A549 (cell line): ENCODE measurements at regions of chr5 and their contacts with region 1.

Region 1: GRCh38 chr5:178965465-178966055 is 24.6 kb downstream of the ZNF454 start:
- DNase-seq: no peak
- ATAC-seq: no peak
- H3K4me3 ChIP-seq: no peak overlapping the region
- H3K27ac ChIP-seq: no peak overlapping the region
- H3K4me1 ChIP-seq: no peaks in the 10 kb centered on the region
- CTCF ChIP-seq: no peak
- EP300 ChIP-seq: no peak
- POLR2A ChIP-seq: no peak
- RAD21 ChIP-seq: no peak

Region 2: GRCh38 chr5:179080724-179081123 is 115.2 kb after region 1 on chr5:
- CTCF ChIA-PET with region 1: no interaction called
- POLR2A ChIA-PET with region 1: interaction called, 10 read pairs
- DNase-seq: no peak
- ATAC-seq: no peak
- H3K4me3 ChIP-seq: no peak overlapping the region
- H3K27ac ChIP-seq: no peak overlapping the region
- H3K4me1 ChIP-seq: no peaks in the 10 kb centered on the region
- CTCF ChIP-seq: no peak
- EP300 ChIP-seq: no peak
- POLR2A ChIP-seq: no peak
- RAD21 ChIP-seq: no peak